Prostate gland (tissue), 2 donors: ENCODE measurements at regions of chr6 and their contacts with region 1.

Region 1: DNA sequence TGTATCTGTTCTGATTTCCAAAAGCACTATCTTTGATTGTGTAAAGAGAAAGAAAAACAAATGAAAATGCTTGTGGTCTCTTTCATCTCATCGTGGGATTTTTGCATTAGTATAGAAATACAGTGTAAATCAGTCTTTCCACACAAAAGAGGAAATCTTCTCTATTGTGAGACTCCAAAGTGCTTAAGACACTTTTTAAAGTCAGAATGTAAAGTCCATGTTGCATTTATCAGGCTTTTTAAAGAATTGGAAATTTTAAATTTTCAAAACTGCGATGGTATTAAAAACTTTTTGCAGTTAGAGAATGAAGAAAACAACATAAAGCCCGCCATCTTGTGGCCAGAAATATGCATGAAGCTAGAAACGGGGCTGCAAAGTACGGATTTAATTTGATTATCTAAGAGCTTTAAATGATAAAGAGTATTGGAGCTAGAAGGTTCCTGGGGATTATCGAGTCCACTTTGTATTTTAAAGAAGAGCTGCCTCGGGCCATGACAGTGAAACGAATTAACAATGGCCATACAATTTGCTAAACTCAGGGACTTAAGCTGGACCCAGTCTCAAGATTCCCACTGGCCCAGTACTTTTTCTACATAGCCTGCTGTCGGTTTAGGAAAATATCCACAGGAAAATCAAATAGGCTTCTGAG is 339.6 kb downstream of the ARHGAP18 start:
- DNase-seq: peak; percentile 13
- H3K4me3 ChIP-seq: no peak overlapping the region
- H3K27ac ChIP-seq: no peak overlapping the region
- H3K4me1 ChIP-seq: no peaks in the 10 kb centered on the region
- H3K27me3 ChIP-seq: no peaks in the 10 kb centered on the region
- CTCF ChIP-seq: peak; percentile 39 to 61 (median 59)
- POLR2A ChIP-seq: no peak

Region 2: DNA sequence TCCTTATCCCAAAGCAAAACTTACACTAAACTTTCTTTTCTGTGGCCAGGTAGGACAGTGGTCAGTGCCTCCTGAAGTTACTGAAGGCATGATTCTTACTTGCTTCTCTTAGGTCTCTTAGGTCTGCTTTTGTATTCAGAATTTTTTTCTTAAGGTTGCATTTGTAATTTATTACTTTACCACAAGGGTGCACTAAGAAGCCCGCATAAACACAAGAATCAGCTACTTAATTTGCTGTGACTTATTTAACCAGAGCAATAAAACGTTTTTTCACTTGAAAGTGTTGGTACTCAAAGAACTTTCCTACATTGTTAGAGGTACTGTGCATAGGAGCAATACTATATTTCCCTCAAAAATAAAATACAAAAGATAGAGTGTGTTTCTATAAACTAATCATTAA is 562.8 kb before region 1 on chr6:
- intact Hi-C with region 1: loop called (anchors 5 kb)
- DNase-seq: no peak
- H3K4me3 ChIP-seq: no peak overlapping the region
- H3K27ac ChIP-seq: no peak overlapping the region
- H3K4me1 ChIP-seq: no peaks in the 10 kb centered on the region
- H3K27me3 ChIP-seq: no peaks in the 10 kb centered on the region
- CTCF ChIP-seq: peak; percentile 17 to 35 (median 26)
- POLR2A ChIP-seq: no peak